ENCODE measurements at regions of chr7 and their contacts with region 1.

Region 1: DNA sequence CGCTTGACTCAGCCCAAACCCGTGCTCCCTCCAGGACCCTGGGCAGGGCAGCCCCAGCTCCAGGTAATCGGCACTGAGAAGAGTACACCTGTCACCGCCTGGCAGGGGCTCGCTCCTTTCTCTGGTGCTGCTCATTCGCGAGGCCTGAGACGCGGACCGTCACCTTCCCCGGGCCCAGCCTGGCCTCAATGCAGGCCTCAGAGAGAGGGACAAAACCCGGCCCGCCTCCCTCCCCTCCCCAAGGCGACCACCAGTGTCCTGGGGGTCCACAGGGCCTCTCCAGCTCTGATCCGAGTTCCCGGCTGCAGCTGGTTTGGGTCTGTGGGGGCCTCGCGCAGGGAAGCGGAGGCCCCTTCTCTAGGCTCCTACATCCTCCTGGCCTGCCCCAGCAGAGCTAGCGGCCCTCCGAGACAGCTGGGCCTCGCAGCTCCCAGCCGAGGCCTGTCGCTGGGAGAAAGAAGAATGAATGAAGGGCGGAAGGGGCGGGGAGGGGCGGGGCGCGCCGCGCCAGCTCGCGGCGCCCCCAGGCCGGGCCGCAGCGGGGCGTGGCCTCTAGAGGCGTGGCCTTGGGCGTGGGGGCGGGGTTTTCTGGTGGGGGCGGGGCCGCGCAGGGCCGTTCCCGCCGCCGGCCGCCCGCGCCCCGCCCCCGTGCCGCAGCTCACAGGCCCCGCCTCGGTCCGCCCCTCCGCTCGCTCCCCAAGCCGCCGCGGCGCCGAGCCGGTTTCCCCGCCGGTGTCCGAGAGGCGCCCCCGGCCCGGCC is at the start of gene LIMK1:
- DNase-seq: peak; percentile 93
- total RNA-seq, gene LIMK1: 19.4 to 22.3 TPM

Region 2: DNA sequence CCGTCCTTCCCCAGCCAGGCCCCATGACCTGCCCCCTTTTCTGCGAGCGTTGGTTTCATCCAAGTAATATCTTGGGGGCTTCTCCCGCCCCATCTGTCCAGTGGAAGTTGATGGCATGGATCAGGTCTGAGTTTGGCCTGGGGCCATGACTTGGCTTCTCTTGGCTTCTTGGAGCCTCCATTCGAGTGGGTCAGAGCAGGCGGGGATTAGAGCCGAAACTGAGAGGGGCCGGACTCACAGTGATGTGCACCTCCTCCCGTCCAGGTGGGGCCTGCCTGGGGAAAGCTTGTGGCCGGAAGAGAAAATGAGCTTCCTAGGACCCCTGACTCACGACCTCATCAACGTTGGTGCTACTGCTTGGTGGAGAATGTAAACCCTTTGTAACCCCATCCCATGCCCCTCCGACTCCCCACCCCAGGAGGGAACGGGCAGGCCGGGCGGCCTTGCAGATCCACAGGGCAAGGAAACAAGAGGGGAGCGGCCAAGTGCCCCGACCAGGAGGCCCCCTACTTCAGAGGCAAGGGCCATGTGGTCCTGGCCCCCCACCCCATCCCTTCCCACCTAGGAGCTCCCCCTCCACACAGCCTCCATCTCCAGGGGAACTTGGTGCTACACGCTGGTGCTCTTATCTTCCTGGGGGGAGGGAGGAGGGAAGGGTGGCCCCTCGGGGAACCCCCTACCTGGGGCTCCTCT is 14.8 kb before region 1 on chr7:
- intact Hi-C with region 1: no loop called
- DNase-seq: peak; percentile 73

Region 3: DNA sequence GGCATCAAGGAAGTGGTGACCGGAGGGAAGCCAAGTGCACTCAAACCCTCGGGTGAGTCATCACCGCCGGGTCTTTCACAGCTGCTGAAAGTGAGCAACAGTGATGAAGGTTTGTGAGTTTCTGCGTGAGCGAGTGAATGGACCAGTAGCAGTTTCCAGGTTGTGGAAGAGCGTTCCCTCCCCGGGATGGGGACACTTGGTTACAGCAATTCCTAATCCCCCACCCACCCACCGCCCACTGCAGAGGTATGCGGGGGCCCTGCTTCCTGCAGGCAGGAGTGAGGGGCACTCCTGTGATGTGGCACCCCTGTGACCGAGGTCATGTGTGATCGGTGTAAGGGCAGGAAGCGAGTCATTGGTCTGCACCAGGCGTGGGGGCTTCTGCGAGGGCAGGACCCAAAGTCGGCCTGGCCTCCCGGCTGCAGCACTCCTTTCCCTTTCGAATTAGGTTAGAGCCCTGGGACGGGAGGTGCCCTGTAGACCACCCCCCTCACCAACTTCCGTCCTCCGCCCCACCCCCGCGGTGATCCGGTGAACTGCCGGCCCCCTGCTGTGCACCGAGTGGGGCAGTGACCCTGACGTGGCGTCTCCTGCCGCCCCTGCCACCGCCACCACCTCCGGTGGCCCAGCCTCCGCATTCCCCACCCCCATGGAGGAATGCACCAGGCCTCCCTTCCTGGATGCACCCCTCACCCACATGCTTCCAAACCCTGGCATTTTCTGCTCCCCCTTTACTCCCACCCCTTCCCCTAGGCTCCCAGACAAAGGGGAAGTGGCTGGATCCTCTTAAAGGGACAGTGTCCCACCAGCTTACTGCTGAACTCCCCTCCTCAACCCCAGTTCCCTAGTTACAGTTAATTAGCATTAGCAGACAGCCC is 11.2 kb after region 1 on chr7:
- intact Hi-C with region 1: loop called in 1 of 2 experiments (anchors 1 kb)
- DNase-seq: peak; percentile 95

Region 4: DNA sequence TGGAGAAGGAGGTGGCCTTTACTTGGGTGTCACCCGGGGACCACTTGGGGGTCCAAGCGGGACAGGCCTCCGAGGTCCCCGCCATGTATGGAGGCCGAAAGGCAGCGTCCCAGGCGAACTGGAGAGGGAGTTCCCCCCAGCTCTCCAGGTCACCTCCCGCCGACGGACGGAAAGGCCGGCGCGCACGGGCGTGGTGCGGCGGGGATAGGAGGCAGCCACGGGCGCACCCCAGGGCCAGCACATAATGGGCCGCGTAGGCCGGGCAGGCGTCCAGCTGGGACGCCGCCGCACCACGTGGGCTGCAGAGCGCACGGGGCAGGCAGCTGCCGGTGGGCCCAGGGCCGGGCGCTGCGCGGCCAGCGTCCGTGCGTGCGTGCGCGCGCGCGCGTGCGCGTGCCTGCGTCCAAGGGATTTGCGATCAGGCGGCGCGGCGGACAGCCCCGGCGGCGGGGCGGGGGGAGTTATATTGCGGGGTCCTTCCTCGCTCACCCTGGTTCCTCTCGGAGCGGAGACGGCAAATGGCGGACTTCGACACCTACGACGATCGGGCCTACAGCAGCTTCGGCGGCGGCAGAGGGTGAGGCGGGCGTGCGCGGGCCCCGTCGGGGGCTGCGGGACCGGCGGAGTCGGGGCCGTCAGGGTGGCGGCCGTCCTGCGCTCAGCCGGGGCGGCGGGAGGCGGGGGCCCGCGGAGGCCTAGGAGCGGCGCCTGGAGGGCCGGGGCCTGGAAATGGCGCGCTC is 90.7 kb after region 1 on chr7 and contains the start of gene EIF4H:
- intact Hi-C with region 1: loop called in 1 of 2 experiments (anchors 10 kb)
- DNase-seq: peak; percentile 99
- total RNA-seq, gene EIF4H: 207 to 213 TPM

Measured in posterior vena cava (tissue), 2 donors.